GM10248 (cell line): ENCODE measurements at regions of chr5 and their contacts with region 1.

Region 1: DNA sequence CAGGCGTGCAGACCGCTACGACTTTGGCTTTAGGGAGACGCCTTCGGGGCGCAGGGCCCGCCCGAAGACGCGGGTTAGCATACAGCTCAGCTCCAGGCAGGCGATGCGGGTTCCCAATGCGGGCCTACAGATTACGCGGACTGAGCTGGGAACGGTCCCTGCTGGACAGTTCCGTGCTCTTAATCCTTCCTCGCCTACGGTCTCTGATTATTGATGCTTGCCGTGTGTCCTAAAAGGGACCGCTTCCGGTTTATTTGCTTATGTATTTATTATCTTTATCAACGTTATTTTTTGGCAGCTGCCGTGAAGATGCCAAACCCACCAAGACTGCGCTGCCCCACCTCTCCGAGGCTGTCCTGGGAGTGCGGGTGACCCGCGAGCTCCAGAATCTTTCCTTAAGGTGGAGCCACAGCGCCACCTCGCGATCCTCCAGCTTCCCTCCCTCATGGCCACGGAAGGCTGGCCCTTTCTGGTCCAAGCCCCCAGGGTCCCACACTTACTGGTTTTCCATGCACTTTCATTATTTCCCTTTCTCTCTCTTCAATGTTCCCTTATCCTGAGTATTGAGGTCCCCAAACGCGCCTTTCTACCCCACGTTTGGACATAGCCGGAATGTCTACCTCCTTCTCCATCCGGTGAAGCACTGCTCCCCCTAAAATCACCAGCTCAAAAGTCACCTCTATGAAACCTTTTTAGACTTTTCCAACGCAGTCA is 7.0 kb upstream of the EBF1 start:
- DNase-seq: peak; percentile 80
- CTCF ChIP-seq: peak; percentile 92

Region 2: DNA sequence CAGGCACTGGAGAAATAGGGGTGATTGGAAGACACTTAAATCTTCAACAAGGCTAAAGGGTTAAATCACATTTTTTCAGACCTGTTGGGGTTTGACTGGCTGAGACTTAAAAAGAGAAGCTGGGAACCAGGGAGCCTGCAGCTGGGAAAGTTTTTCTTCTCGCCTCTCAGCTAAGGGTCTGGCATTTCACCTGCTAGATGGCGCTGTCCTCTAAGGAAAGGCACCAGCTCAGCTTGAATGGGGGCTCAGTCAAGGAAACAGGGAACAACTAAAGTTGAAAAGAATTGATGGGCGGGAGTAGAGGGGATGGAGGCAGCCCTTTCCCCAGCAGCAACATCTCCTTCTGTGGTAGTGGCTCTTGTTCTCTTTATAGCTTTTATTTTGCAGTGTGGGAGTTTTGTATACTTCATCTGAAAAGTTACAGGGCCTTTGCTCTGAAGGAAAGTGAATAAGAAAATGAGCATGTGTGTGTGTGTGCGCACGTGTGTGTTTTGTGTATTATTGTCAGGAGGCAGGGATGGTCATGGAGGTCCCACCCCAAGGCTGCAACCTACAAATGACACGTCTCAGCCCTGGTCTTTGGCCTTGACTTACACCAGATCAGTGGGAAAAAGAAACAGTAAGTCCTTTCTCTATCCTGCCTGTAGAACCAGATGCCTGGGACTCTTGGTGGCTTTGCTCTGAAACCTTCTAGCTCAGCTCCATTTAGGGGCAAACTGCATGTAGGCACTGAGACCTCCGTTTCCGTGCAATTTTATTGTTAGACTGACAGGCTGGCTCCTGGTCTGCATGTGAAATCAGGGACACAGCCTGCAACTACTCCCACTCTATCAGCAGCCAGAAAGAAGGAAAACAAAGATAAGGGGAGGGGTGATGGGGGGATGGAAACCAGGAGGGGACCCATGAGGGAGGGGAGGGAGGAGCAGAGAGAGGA is 931.5 kb before region 1 on chr5:
- CTCF ChIA-PET with region 1: interaction called, 125 read pairs
- POLR2A ChIA-PET with region 1: no interaction called
- DNase-seq: peak; percentile 75
- CTCF ChIP-seq: peak; percentile 89

Region 3: DNA sequence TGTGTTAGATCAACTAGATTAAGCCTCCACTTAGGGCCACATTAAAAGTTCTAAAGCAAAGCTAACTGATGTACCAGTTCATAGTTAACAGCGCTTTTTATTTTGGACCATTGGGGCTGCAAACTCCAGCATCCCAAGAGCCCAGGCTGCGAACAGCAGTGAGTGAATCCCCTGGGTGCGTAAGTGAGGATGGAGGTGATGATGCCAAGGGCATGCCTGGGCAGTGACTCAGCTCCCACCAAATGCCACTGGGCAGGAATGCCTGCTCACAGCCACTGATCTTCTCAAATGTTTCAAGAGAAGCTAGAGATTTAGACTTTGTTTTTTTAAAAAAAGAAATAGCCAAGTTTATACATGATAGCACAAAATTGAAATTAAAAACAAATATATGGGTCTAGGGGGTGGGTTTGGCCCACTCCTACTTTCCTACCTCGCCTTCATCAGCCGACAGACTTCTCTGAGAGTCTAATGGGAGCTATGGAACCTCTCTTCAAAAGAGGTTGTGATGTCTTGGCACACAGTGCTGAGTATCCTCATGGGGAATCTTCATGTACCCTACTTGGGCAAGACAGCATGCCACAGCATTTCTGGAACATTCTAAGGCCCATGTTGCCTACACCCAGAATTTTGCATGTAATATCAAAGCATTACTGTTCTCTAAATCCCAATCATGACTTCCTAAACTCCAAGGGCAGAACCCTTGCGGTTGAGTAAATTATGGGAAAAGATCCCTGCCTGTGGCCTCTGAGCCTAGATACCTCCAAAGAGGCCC is 405.1 kb before region 1 on chr5:
- CTCF ChIA-PET with region 1: interaction called, 255 read pairs
- POLR2A ChIA-PET with region 1: no interaction called
- DNase-seq: no peak
- CTCF ChIP-seq: no peak

Region 4: DNA sequence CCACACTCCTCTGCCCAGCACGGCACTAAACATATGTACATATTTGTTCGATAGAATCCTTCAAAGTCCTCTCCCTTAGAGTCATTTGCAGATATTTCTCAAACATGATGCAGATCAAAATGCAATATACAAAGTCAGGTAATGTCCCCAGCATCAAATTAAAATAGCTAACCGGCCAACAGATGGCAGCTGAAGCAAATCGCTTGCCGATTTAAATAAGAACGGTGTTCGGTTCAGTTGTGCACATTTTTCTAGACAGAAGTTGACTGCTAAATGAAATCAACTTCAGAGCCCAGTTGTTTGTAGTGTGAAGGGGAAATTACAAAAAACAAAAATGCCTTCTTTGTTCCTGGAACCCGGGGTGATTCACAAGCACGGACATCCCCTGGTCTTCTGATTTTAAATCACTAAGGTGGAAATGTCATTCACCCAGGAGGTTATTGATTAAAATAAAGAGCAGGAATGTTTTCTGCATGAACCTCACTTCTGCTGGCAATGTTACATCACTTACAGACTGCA is 226.2 kb before region 1 on chr5:
- CTCF ChIA-PET with region 1: interaction called, 11 read pairs
- POLR2A ChIA-PET with region 1: no interaction called
- DNase-seq: no peak
- CTCF ChIP-seq: peak; percentile 50

Region 5: GRCh38 chr5:158953929-158954534 is 152.7 kb before region 1 on chr5:
- CTCF ChIA-PET with region 1: interaction called, 10 read pairs
- POLR2A ChIA-PET with region 1: no interaction called
- DNase-seq: peak; percentile 56
- CTCF ChIP-seq: no peak

Region 6: DNA sequence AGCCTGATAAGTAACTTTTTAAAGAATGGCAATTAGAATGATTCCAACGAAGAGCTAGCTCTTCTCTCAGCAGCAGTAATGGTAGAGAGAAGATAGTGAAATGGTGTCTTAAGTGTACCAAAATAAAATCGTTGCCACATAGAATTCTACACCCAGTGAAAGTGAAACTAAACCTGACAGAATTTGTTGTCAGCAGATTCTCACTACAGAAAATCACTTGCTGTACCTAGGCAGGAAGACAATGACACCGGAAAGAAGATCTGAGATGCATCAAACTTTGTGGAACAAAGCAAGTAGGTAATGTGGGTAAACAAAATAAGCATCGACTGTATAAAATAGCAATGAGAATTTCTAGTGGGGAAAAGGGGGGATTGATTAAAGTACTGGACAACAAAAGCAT is 13.7 kb after region 1 on chr5:
- CTCF ChIA-PET with region 1: interaction called, 16 read pairs
- POLR2A ChIA-PET with region 1: no interaction called
- DNase-seq: no peak
- CTCF ChIP-seq: no peak